ENCODE measurements at regions of chr13 and their contacts with region 1.

Region 1: DNA sequence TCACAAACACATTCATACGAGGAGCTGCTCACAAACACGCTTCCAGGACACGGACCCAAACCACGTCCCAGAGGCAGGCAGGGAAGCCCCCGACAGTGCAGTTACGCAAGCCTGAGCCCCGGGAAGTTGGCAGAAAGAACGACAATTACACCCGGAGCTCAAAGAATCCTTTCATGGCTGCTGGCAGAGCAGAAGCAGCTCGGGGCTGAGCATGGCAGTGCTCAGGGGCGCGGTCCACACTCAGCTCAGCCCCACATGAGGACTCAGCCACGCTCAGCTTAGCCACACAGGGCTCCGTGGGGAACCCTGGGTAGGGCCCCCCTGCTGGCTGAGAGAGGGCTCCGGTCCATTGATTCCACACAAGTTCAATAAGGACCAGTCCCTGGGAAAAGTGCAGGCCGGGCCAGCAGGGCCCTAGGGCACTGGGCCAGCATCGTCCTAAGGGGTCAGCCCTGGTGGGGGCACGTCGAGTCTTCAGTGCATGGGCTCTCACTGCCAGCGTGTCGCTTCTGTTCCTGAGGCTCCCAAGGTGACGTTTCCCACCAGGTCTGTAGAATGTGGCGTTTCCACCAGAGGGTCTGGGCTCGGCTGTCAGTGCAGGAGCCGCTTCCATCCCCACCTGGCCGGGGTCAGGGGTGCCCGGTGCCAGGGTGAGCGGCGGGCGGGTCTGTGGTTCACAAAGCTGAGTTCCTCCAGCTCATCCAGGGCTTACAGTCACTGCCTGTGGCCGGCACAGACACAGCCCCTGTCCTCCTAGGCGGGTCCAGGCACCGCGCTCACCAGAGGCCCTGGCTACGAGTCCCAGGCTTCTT is 23.1 kb downstream of the GAS6 start:
- DNase-seq: no peak
- H3K4me3 ChIP-seq: no peak overlapping the region
- H3K27ac ChIP-seq: no peak overlapping the region; the same call in 1 of the 2 replicates
- H3K4me1 ChIP-seq: peaks cover 0 to 16% (median 7%) of the 10 kb centered on the region in 4 experiments; a peak in 5 of 7 replicates
- H3K27me3 ChIP-seq: no peaks in the 10 kb centered on the region
- CTCF ChIP-seq: no peak
- EP300 ChIP-seq: no peak
- POLR2A ChIP-seq: no peak
- RAD21 ChIP-seq: no peak

Region 2: GRCh38 chr13:113825841-113826240 is 14.9 kb before region 1 on chr13:
- CTCF ChIA-PET with region 1: interaction called, 10 read pairs
- POLR2A ChIA-PET with region 1: no interaction called
- DNase-seq: no peak
- H3K4me3 ChIP-seq: no peak overlapping the region
- H3K27ac ChIP-seq: no peak overlapping the region
- H3K4me1 ChIP-seq: peaks cover 0 to 3% (median 0%) of the 10 kb centered on the region in 4 experiments; a peak in 1 of 7 replicates
- H3K27me3 ChIP-seq: no peaks in the 10 kb centered on the region; a peak in 1 of 7 replicates
- CTCF ChIP-seq: no peak
- EP300 ChIP-seq: no peak
- POLR2A ChIP-seq: no peak
- RAD21 ChIP-seq: 0 out of 4 replicates have a peak, but pooled peaks of 1 of the 2 experiments have one; percentile 6

Region 3: DNA sequence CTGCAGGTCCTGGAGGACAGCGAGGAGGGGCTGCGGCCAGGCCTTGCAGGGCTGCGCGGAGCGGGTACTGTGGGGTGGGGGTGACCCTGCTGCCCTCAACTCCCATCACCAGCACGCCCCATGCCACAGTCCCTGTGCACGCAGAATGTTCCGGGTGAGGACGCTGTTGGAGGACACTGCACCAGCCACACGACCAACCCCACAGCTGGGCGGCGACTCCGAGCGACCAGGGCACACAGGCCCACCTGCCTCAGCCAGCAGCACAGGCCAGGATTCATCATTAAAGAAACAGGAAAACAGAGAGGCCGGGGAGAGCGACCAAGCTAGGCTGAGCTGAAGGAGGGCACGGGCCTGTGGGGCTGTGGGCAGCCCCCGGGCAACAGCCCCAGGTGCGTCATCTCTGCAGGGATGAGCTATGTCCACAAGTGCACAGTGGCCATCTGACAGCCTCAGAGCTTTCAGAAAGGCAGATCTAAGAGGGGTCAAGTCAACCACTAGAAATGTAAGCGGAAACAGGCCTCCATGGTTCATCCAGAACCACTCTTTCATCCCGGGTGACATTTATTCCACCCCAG is 21.5 kb after region 1 on chr13:
- CTCF ChIA-PET with region 1: no interaction called
- POLR2A ChIA-PET with region 1: no interaction called
- DNase-seq: peak in 1 of 2 experiments; percentile 50
- H3K4me3 ChIP-seq: peak overlapping the region in 2 of 4 experiments; percentile 47 to 75; a peak in 5 of 8 replicates
- H3K27ac ChIP-seq: no peak overlapping the region
- H3K4me1 ChIP-seq: peaks cover 16 to 49% (median 30%) of the 10 kb centered on the region in 4 experiments
- H3K27me3 ChIP-seq: peaks cover 0 to 27% (median 18%) of the 10 kb centered on the region in 4 experiments; a peak in 6 of 7 replicates
- CTCF ChIP-seq: no peak
- EP300 ChIP-seq: no peak
- POLR2A ChIP-seq: no peak
- RAD21 ChIP-seq: no peak

Measured in H1 (cell line).